Activated T-helper 1 cell treated with anti-CD3 and anti-CD28 coated beads, Interleukin-12 subunit alpha, Interleukin-12 subunit beta, Interleukin-2, Interleukin-4 antibody, amounts not matched to agents 30 ng/mL and 10 ng/mL and 1 ng/mL, durations not matched to agents 14 hours and 24 hours and 36 hours (primary cell): ENCODE measurements at regions of chr4 and their contacts with region 1.

Region 1: DNA sequence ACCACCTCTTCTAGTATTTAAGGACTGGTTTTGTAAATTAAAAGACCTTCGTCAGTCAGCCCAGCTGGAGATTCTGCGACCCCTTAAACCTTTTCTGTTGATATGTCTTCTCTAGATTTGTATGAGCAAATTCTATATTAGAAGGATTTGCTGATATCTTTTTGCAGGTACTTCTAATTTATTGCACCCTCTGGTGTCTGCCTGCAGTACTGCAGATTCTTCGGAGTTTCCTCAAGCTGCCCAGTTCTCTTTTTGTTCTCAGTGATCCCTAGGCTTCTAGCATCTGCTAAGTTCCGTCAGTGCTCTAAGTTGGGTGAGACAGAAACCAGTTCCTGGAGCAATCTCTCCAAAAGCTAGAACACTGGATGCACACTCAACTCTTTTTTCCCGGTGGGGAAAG is 545.2 kb downstream of the C4orf33 start:
- DNase-seq: peak; percentile 14
- H3K4me3 Mint-ChIP-seq: no peak overlapping the region
- H3K27ac Mint-ChIP-seq: no peak overlapping the region
- H3K4me1 Mint-ChIP-seq: no peaks in the 10 kb centered on the region
- H3K27me3 Mint-ChIP-seq: peaks cover 2% of the 10 kb centered on the region

Region 2: DNA sequence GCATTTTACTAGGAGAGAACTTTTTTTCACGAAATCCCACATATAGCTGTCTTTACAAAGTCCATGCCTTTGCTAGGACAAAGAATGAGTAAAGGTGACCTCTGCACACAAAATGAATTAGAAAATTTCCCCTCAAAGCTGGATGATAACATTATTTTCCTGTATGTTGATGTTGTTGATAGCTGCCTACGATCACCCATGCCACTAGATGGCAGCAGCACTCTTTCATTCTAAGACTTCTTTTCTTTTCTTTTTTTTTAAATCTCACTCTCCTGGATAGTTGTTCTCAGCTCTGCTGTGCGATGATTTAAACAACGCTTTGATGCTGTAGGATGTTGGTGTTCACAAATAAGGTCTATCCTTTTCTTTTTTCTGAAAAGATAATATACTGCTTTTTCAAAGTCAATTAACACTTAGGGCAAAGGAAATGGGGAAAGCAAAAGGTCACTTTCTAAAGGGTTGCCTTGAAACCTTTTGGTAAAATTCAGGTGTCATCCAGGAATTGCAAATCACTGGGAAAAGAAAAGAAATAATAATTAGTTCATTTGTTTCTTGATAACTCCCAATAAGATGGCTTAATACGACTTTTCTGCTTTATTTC is 278.4 kb before region 1 on chr4:
- intact Hi-C with region 1: loop called (anchors 1 kb)
- DNase-seq: peak; percentile 12
- H3K4me3 Mint-ChIP-seq: no peak overlapping the region
- H3K27ac Mint-ChIP-seq: no peak overlapping the region
- H3K4me1 Mint-ChIP-seq: no peaks in the 10 kb centered on the region
- H3K27me3 Mint-ChIP-seq: peaks cover 4% of the 10 kb centered on the region

Region 3: GRCh38 chr4:129769348-129769747 is 128.2 kb after region 1 on chr4:
- intact Hi-C with region 1: no loop called
- DNase-seq: no peak
- H3K4me3 Mint-ChIP-seq: no peak overlapping the region
- H3K27ac Mint-ChIP-seq: no peak overlapping the region
- H3K4me1 Mint-ChIP-seq: no peaks in the 10 kb centered on the region
- H3K27me3 Mint-ChIP-seq: no peaks in the 10 kb centered on the region